IMR-90 (cell line): ENCODE measurements at regions of chr14 and their contacts with region 1.

Region 1: GRCh38 chr14:79064214-79064613 is 894.0 kb downstream of the NRXN3 start:
- DNase-seq: no peak
- ATAC-seq: no peak
- H3K4me3 ChIP-seq: no peak overlapping the region
- H3K27ac ChIP-seq: no peak overlapping the region
- H3K4me1 ChIP-seq: no peaks in the 10 kb centered on the region
- H3K27me3 ChIP-seq: peaks cover 61% of the 10 kb centered on the region
- CTCF ChIP-seq: no peak
- POLR2A ChIP-seq: no peak
- RAD21 ChIP-seq: no peak

Region 2: GRCh38 chr14:79144896-79145295 is 80.7 kb after region 1 on chr14:
- CTCF ChIA-PET with region 1: no interaction called
- POLR2A ChIA-PET with region 1: no interaction called
- dilution Hi-C with region 1: no loop called
- in situ Hi-C with region 1: no loop called
- intact Hi-C with region 1: no loop called
- DNase-seq: peak; percentile 24
- ATAC-seq: no peak
- H3K4me3 ChIP-seq: no peak overlapping the region
- H3K27ac ChIP-seq: no peak overlapping the region
- H3K4me1 ChIP-seq: no peaks in the 10 kb centered on the region
- H3K27me3 ChIP-seq: no peaks in the 10 kb centered on the region
- CTCF ChIP-seq: no peak
- POLR2A ChIP-seq: no peak
- RAD21 ChIP-seq: no peak

Region 3: GRCh38 chr14:79911744-79912143 is 847.5 kb after region 1 on chr14:
- CTCF ChIA-PET with region 1: interaction called, 11 read pairs
- POLR2A ChIA-PET with region 1: no interaction called
- dilution Hi-C with region 1: no loop called
- in situ Hi-C with region 1: no loop called
- intact Hi-C with region 1: no loop called
- DNase-seq: no peak
- ATAC-seq: no peak
- H3K4me3 ChIP-seq: no peak overlapping the region
- H3K27ac ChIP-seq: no peak overlapping the region
- H3K4me1 ChIP-seq: no peaks in the 10 kb centered on the region
- H3K27me3 ChIP-seq: peaks cover under 1% of the 10 kb centered on the region; the same call in 1 of the 2 replicates
- CTCF ChIP-seq: no peak
- POLR2A ChIP-seq: no peak
- RAD21 ChIP-seq: no peak